Activated CD8-positive, alpha-beta T cell treated with anti-CD3 and anti-CD28 coated beads for 36 hours (primary cell): ENCODE measurements at regions of chr19 and their contacts with region 1.

Region 1: GRCh38 chr19:46076951-46077816 is 36.4 kb upstream of the IGFL4 start:
- DNase-seq: peak; percentile 62
- ATAC-seq: peak; percentile 77
- H3K4me3 Mint-ChIP-seq: no peak overlapping the region
- H3K27ac Mint-ChIP-seq: no peak overlapping the region
- H3K4me1 Mint-ChIP-seq: peaks cover 10% of the 10 kb centered on the region
- H3K27me3 Mint-ChIP-seq: peaks cover 77% of the 10 kb centered on the region
- CTCF ChIP-seq: peak; percentile 67

Region 2: GRCh38 chr19:46021531-46022041 is 55.6 kb before region 1 on chr19:
- CTCF ChIA-PET with region 1: interaction called, 13 read pairs
- POLR2A ChIA-PET with region 1: no interaction called
- intact Hi-C with region 1: loop called (anchors 10 kb)
- DNase-seq: no peak
- ATAC-seq: no peak
- H3K4me3 Mint-ChIP-seq: no peak overlapping the region
- H3K27ac Mint-ChIP-seq: no peak overlapping the region
- H3K4me1 Mint-ChIP-seq: peaks cover 12% of the 10 kb centered on the region
- H3K27me3 Mint-ChIP-seq: peaks cover 13% of the 10 kb centered on the region
- CTCF ChIP-seq: no peak

Region 3: DNA sequence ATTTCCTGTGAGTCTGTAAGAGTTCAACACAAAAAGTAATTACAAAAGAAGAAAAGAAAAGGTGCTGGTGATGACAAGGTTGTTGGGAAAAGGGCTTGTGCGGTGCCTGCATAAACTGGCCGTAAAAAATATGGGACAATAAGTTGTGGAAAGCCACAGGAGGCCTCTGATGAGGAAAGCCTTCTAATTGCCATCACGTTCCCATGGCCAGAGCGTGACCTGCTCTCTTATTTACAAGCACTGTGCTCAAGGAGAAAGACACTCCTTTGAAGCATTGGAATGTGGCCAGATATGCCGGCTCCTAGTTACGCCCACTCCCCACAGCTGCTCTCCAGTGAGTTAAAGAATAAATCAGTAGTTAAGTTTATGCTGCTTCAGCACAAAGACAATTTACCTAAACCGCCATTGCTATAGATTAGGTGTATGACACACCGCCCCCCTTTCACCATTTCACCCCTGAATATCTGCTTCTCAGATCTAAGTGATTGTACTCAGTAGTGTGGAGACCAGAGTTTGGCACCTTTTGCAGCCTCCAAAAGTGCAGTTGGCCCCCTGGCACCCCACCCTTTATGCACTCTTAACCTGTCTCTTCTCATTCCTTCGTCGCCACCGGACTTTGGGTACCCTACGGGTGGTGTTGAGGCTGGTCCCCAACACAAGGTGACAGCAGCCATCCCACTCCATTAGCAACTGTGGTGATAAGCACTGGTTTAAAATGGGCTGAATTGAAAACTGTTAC is 46.2 kb before region 1 on chr19:
- CTCF ChIA-PET with region 1: interaction called, 42 read pairs
- POLR2A ChIA-PET with region 1: no interaction called
- intact Hi-C with region 1: loop called (anchors 10 kb)
- DNase-seq: no peak
- ATAC-seq: no peak
- H3K4me3 Mint-ChIP-seq: no peak overlapping the region
- H3K27ac Mint-ChIP-seq: no peak overlapping the region
- H3K4me1 Mint-ChIP-seq: peaks cover 12% of the 10 kb centered on the region
- H3K27me3 Mint-ChIP-seq: peaks cover 19% of the 10 kb centered on the region
- CTCF ChIP-seq: no peak

Region 4: DNA sequence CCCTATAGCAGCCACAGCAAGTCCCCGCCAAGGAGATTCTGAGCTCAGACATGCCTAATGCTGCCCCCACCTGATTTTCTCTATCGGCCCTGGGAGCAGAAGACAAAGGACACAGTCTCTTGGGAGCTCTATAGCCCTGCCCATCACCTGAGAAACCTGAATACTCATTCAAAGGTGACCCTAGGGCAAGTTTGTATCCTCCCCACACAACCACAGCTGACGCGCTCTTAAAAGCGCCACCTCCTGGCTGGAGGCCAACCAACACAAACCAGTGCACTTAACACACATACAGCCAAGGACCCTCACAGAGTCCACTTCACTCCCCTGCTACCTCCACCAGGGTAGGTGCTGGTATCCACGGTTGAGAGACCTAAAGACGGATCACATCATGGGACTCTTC is 27.6 kb before region 1 on chr19:
- CTCF ChIA-PET with region 1: interaction called, 15 read pairs
- POLR2A ChIA-PET with region 1: no interaction called
- intact Hi-C with region 1: no loop called
- DNase-seq: peak; percentile 24
- ATAC-seq: no peak
- H3K4me3 Mint-ChIP-seq: no peak overlapping the region
- H3K27ac Mint-ChIP-seq: no peak overlapping the region
- H3K4me1 Mint-ChIP-seq: no peaks in the 10 kb centered on the region
- H3K27me3 Mint-ChIP-seq: peaks cover 58% of the 10 kb centered on the region
- CTCF ChIP-seq: peak; percentile 40

Region 5: GRCh38 chr19:46173886-46174507 is 96.8 kb after region 1 on chr19:
- CTCF ChIA-PET with region 1: interaction called, 10 read pairs
- POLR2A ChIA-PET with region 1: no interaction called
- intact Hi-C with region 1: no loop called
- DNase-seq: no peak
- ATAC-seq: no peak
- H3K4me3 Mint-ChIP-seq: no peak overlapping the region
- H3K27ac Mint-ChIP-seq: no peak overlapping the region
- H3K4me1 Mint-ChIP-seq: no peaks in the 10 kb centered on the region
- H3K27me3 Mint-ChIP-seq: peaks cover 40% of the 10 kb centered on the region
- CTCF ChIP-seq: no peak

Region 6: DNA sequence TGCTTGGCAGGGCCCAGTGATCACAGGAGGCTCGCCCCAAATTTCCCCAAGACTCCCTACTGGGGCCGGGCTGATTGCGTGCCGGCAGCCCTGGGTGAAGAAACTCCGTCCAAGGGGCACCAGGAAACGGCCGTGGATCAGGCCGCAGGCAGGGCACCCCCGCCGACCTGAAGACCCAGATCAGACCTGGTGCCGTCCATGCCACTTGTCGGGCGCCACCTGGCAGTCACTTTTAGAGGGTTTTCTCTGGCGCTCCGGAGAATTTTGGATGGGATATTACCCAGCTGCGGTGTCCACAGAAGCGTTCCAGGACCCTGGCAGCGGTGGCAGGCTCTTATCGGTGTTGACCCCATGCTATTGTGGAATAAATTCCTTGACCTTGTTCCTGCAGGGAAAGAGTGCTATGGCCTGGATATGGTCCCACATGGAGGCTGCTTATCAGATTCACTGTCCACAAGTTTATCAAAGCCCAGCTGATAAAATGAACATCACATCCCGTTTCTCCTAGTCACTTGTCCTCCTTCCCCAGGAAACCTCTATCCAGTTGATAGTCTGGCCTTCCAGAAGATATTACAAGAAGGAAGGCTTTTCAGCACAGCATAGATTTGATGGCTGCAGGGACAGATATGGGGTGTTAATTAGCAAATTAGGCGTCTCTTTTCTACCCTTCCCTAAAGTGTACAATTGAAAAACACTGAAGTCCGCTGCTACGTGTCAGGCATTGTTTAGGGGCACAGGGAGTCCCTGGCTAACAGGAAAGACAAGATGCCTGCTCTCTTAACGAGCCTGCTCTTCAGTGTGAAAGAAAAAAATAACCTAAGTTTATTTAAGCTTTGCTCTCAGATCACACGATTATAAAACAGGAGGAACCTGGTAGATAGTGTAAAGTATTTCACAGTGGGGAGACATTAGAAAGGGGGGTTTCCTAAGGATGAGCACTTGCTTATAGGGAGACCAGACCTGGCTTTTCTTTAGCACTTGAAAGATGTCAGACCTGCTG is 109.2 kb after region 1 on chr19:
- CTCF ChIA-PET with region 1: interaction called, 8 read pairs
- POLR2A ChIA-PET with region 1: no interaction called
- intact Hi-C with region 1: loop called (anchors 5 kb)
- DNase-seq: no peak
- ATAC-seq: no peak
- H3K4me3 Mint-ChIP-seq: no peak overlapping the region
- H3K27ac Mint-ChIP-seq: no peak overlapping the region
- H3K4me1 Mint-ChIP-seq: peaks cover 19% of the 10 kb centered on the region
- H3K27me3 Mint-ChIP-seq: peaks cover 60% of the 10 kb centered on the region
- CTCF ChIP-seq: no peak

Region 7: DNA sequence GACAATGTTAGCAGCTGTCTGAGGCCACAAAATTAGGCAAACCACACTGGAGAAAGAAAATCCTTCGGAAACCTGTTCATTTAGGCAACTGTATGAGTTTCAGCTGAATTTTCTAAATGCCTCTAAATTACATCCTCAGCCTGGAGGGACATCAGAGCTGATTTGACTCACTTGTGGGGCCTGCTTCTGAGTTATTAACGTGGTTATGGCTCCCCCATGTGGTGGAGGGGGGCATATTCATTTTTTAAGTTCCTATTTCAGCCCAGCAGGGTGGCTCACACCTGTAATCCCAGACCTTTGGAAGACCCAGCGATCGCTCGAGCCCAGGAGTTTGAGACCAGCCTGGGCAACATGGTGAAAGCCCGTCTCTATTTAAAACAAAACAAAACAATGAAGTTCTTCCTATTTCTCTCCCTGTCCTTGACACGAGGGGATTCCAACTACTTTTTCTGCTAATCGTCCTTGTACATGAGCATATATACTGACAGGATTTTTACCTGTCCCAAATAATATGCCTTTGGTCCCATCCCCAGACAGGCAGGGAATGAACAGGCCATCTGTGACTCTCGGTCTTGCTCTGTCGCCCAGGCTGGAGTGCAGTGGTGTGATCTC is 188.1 kb after region 1 on chr19:
- CTCF ChIA-PET with region 1: interaction called, 92 read pairs
- POLR2A ChIA-PET with region 1: no interaction called
- intact Hi-C with region 1: loop called (anchors 5 kb)
- DNase-seq: peak; percentile 84
- ATAC-seq: peak; percentile 67
- H3K4me3 Mint-ChIP-seq: no peak overlapping the region
- H3K27ac Mint-ChIP-seq: no peak overlapping the region
- H3K4me1 Mint-ChIP-seq: peaks cover 14% of the 10 kb centered on the region
- H3K27me3 Mint-ChIP-seq: peaks cover 50% of the 10 kb centered on the region
- CTCF ChIP-seq: peak; percentile 94